Left ventricle myocardium inferior (tissue), 1 donor: ENCODE measurements at regions of chr5 and their contacts with region 1.

Region 1: GRCh38 chr5:56270568-56271392 is 37.6 kb upstream of the ANKRD55 start:
- DNase-seq: peak; percentile 78
- H3K4me3 ChIP-seq: no peak overlapping the region
- H3K27ac ChIP-seq: no peak overlapping the region
- H3K4me1 ChIP-seq: peaks cover 13% of the 10 kb centered on the region
- H3K27me3 ChIP-seq: peaks cover 3% of the 10 kb centered on the region
- CTCF ChIP-seq: peak; percentile 99

Region 2: DNA sequence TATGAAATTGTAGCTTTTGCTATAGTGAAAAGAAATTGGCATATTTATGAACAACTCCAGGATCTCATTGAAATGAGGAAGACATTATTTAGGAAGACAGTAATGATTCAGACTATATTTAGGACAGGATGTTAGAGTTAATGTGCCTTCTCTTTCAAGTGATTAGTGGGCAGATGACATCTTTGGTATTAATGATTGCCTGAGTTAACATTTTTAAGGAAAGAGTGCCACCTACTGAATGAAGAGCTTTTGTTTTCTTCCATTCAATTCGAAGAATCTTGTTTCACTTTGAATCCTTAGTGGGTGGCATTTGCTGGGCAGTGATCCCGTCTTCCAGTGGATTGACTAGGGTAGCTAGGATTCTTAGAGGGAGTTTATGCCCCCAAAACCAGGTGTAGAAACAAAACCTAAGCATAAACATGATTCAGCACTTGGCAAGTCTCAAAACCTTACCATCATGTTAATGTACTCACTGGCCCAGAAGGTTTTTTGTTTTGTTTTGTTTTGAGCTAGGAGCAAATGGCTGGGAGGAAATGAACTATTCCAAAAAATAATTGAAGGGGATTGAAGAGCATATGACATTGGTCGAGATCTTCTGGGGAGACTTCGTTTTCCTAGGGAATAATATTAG is 567.7 kb after region 1 on chr5:
- intact Hi-C with region 1: loop called (anchors 5 kb)
- DNase-seq: no peak
- H3K4me3 ChIP-seq: peak overlapping the region; percentile 29
- H3K27ac ChIP-seq: peak overlapping the region; percentile 54
- H3K4me1 ChIP-seq: peaks cover 80% of the 10 kb centered on the region
- H3K27me3 ChIP-seq: no peaks in the 10 kb centered on the region
- CTCF ChIP-seq: peak; percentile 72